Esophagus squamous epithelium (tissue), 5 donors: ENCODE measurements at regions of chr2 and their contacts with region 1.

Region 1: GRCh38 chr2:36785179-36785795 is 88.8 kb downstream of the VIT start:
- DNase-seq: no peak
- H3K4me3 ChIP-seq: no peak overlapping the region
- H3K27ac ChIP-seq: no peak overlapping the region
- H3K4me1 ChIP-seq: peaks cover 0 to 6% (median 2%) of the 10 kb centered on the region in 3 donors
- H3K27me3 ChIP-seq: no peaks in the 10 kb centered on the region
- CTCF ChIP-seq: peak; percentile 74 to 98 (median 94)
- POLR2A ChIP-seq: no peak

Region 2: GRCh38 chr2:36680012-36680411 is 105.3 kb before region 1 on chr2:
- intact Hi-C with region 1: no loop called
- DNase-seq: no peak
- H3K4me3 ChIP-seq: no peak overlapping the region
- H3K27ac ChIP-seq: no peak overlapping the region
- H3K4me1 ChIP-seq: no peaks in the 10 kb centered on the region
- H3K27me3 ChIP-seq: no peaks in the 10 kb centered on the region
- CTCF ChIP-seq: no peak
- POLR2A ChIP-seq: no peak

Region 3: DNA sequence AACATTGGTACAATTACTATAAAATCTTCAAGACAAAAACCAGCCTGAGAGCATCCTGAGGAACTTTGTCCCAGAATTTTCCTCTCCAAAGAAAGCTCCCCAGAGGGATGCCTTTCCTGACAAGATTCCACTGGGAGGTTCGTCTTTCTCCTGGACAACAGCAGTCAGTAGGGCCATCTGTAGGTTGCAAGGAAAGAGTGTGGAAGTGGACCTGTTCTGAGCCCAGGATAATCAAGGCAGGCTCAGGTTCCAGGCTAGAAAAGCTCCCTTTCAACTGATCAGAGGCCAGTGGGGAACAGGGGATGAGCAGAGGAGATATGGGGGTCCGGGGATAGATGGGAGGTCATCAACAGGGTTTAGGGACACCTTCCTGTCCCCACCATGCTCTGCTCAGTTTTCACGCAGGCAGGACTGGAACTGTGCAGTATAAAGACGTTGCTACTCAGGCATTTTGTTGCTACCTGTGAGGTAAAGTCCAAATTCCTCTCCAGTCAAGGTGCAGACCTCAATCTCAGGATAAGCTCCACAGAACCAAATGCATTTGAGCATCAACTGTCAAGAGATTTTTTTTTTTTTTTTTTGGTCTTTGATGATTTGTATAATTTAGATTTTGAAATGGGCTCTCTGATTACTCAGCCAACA is 54.8 kb after region 1 on chr2:
- intact Hi-C with region 1: no loop called
- DNase-seq: no peak
- H3K4me3 ChIP-seq: no peak overlapping the region
- H3K27ac ChIP-seq: no peak overlapping the region
- H3K4me1 ChIP-seq: no peaks in the 10 kb centered on the region
- H3K27me3 ChIP-seq: no peaks in the 10 kb centered on the region
- CTCF ChIP-seq: no peak
- POLR2A ChIP-seq: no peak

Region 4: GRCh38 chr2:37005118-37005868 is 220.0 kb after region 1 on chr2:
- intact Hi-C with region 1: loop called (anchors 10 kb)
- DNase-seq: no peak
- H3K4me3 ChIP-seq: no peak overlapping the region
- H3K27ac ChIP-seq: no peak overlapping the region
- H3K4me1 ChIP-seq: peaks cover 0 to 13% (median 0%) of the 10 kb centered on the region in 3 donors
- H3K27me3 ChIP-seq: no peaks in the 10 kb centered on the region
- CTCF ChIP-seq: peak in 4 of 6 experiments; percentile 30 to 70 (median 44)
- POLR2A ChIP-seq: no peak